ENCODE measurements at regions of chr2 and their contacts with region 1.

Region 1: DNA sequence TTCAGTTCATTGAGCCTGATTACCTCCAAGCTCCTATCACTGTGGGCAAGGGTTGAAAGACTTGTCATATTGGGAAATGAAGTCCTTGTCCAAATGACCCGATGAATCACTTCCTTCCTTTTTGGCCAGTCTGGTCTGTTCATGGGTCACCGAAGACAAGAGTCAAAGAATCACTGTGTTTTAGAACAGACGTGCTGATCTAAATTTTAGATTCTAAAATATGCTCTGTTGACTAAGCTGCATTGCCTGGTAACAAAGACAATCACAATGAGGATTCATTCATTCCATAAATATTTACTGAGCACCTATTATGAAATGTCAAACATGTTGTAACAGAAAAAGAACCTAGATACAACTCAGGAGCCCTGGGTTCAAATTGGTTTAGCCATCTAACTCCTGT is 99.4 kb upstream of the RND3 start:
- DNase-seq: no peak
- H3K4me3 ChIP-seq: no peak overlapping the region
- H3K27ac ChIP-seq: no peak overlapping the region
- H3K4me1 ChIP-seq: no peaks in the 10 kb centered on the region
- H3K27me3 ChIP-seq: no peaks in the 10 kb centered on the region
- CTCF ChIP-seq: no peak
- POLR2A ChIP-seq: no peak

Region 2: DNA sequence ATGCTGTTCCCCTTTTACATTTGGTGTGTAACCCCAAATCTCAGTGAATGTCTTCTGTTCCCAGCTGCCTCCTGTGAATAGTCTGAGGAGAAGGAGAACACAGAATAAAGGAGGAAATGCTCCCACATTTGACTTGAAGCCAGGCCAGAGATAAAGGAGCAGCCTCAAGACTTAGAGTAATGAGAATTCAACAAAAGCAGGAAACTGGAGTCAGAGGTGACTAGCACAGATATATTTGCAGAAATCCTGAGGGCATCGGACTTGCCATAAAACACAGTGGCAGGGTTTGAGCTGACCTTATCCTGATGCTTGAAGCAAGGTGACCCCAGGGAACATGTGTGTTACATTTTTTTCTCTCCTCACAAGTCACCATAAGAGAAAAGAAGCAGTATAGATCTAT is 192.0 kb after region 1 on chr2:
- intact Hi-C with region 1: loop called (anchors 5 kb)
- DNase-seq: no peak
- H3K4me3 ChIP-seq: no peak overlapping the region
- H3K27ac ChIP-seq: no peak overlapping the region
- H3K4me1 ChIP-seq: no peaks in the 10 kb centered on the region
- H3K27me3 ChIP-seq: no peaks in the 10 kb centered on the region
- CTCF ChIP-seq: no peak
- POLR2A ChIP-seq: no peak

Measured in breast epithelium (tissue), 4 donors.